ENCODE measurements at regions of chr2 and their contacts with region 1.

Region 1: DNA sequence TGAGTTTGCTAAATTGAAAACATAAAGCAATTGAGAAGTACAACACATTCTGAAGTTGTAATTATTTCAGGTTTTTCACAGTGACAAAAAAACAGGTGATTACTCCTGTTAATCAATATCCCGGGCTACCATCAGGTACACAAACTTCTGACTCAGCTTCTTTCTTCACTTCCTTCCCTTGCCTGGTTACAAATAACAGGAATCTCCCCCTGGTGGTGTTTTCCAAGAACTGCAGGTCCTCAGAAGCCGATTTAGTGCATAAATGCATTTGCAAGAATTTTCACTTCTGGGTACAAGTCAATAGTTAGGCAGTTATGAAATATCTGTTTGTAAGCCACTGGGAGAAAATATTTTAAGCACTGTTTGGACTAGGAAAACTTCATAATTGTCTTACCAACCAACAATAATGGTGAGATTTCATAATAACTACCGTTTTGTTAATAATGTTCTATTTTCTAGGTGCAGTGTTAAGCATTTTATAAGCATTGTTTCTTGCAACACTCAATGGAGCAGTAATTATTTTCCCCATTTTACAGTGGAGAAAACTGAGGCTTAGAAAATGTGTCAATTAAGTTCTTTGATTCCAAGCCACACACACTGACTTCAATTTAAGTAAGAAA is 12.4 kb upstream of the GMCL1 start:
- DNase-seq: peak; percentile 76
- H3K4me3 ChIP-seq: no peak overlapping the region
- H3K27ac ChIP-seq: no peak overlapping the region
- H3K27me3 ChIP-seq: no peaks in the 10 kb centered on the region
- CTCF ChIP-seq: peak; percentile 90

Region 2: DNA sequence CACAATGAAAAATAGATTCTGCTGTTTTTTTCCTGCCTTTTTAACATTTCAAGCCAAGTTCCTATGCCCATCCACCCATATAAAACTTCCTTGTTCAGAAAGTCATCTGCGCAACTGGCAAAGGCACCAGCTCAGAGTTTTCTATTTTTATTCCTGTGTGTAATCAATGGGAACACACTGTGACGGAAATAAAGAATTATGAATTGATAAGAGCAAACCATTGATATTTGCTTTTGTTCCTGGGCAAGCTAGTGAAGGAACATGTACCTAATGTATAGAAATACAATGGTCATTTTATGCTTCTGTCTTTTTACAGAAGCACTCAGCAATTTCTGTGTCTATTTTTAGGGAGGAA is 142.7 kb before region 1 on chr2:
- CTCF ChIA-PET with region 1: no interaction called
- POLR2A ChIA-PET with region 1: no interaction called
- DNase-seq: no peak
- H3K4me3 ChIP-seq: no peak overlapping the region
- H3K27ac ChIP-seq: no peak overlapping the region
- H3K27me3 ChIP-seq: no peaks in the 10 kb centered on the region
- CTCF ChIP-seq: no peak

Region 3: GRCh38 chr2:69704446-69704845 is 112.6 kb before region 1 on chr2:
- CTCF ChIA-PET with region 1: no interaction called
- POLR2A ChIA-PET with region 1: no interaction called
- DNase-seq: no peak
- H3K4me3 ChIP-seq: no peak overlapping the region
- H3K27ac ChIP-seq: no peak overlapping the region
- H3K27me3 ChIP-seq: no peaks in the 10 kb centered on the region
- CTCF ChIP-seq: no peak

Region 4: DNA sequence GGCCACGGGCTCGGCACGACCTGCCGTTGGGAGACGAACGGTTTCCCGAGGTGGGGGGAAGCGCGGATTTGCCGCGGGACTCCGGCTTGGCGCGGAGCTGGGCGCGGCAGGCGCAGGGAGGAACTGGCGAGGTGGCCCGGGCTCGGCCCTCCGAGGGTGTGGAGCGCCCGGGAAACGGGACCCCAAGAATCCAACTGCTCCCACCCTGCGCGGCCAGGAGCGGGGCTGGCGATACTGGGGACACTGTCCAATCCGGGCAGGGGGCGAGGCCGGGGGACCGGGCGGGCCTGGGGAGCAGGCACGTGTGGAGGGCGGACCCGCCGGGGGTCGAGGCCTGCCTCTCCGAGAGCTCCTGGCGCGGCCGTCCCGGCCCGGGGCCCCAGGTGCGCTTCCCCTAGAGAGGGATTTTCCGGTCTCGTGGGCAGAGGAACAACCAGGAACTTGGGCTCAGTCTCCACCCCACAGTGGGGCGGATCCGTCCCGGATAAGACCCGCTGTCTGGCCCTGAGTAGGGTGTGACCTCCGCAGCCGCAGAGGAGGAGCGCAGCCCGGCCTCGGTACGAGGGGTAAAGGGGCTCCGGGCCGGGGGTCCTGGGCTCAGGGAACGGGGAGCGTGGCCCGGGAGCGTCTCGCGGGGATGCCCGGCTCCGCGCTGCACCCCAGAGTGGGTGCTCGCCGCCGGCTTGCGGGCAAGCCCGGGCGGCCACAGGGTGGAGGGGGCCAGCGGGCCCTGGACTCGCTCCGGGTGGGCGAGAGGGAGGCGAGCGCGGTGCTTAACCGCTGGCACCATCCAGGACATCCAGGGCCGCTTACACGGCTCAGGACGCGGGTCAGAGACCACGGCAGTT is 75.2 kb before region 1 on chr2 and contains the start of gene ANXA4:
- CTCF ChIA-PET with region 1: interaction called, 36 read pairs
- POLR2A ChIA-PET with region 1: interaction called, 4 read pairs
- DNase-seq: peak; percentile 45
- H3K4me3 ChIP-seq: peak within 1 kb of the TSS; percentile 73
- H3K27ac ChIP-seq: peak within 1 kb of the TSS; percentile 95
- H3K27me3 ChIP-seq: no peaks in the 10 kb centered on the region
- CTCF ChIP-seq: no peak
- polyA plus RNA-seq, gene ANXA4: 105 and 125 TPM in 2 replicates

Region 5: GRCh38 chr2:69755862-69756467 is 61.1 kb before region 1 on chr2:
- CTCF ChIA-PET with region 1: interaction called, 11 read pairs
- POLR2A ChIA-PET with region 1: no interaction called
- DNase-seq: no peak
- H3K4me3 ChIP-seq: no peak overlapping the region
- H3K27ac ChIP-seq: no peak overlapping the region
- H3K27me3 ChIP-seq: no peaks in the 10 kb centered on the region
- CTCF ChIP-seq: no peak

Region 6: DNA sequence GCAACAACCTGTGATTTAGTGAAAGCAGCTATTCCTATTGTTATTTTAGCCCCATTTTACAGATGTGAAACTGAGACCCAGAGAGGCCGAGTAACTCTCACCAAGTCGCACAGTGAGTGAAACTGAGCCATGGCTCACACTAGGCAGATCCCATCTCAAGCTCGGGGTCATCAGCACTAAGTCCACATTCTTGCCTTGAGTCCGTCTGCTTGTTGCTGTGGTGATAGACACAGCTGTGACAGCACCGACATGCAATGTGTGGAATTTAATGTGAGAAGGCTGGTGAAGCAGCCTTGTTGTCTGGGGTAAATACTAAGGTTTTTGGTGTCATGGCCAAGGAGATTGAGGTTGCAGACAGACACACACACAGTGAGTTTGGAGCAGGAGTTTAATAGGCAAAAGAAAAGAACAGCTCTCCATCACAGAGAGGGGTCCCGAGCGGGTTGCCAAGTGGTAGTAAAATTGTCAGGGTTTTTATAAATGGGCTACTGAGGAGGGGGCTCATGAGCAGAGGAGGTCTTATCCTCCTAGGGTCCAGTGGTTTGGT is 27.8 kb before region 1 on chr2:
- CTCF ChIA-PET with region 1: interaction called, 13 read pairs
- POLR2A ChIA-PET with region 1: no interaction called
- DNase-seq: peak; percentile 62
- H3K4me3 ChIP-seq: no peak overlapping the region
- H3K27ac ChIP-seq: peak overlapping the region; percentile 47
- H3K27me3 ChIP-seq: no peaks in the 10 kb centered on the region
- CTCF ChIP-seq: no peak

Region 7: DNA sequence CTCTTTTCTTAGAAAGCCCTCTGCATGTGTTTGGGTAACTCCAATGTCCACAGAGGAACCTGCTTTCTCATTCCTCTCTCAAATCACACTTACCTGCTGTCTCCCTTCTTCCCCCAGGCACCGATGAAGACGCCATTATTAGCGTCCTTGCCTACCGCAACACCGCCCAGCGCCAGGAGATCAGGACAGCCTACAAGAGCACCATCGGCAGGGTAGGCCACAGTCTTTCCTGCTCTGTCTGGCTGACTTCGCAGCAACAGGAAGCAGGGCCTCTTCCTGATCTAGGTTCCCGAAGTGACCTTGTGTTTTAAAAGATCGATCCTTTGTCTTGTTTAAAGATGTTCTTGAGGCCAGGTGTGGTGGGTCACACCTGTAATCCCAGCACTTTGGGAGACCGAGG is 12.6 kb before region 1 on chr2:
- CTCF ChIA-PET with region 1: interaction called, 43 read pairs
- POLR2A ChIA-PET with region 1: interaction called, 9 read pairs
- DNase-seq: no peak
- H3K4me3 ChIP-seq: no peak overlapping the region
- H3K27ac ChIP-seq: no peak overlapping the region
- H3K27me3 ChIP-seq: no peaks in the 10 kb centered on the region
- CTCF ChIP-seq: no peak

Measured in AG04450 (cell line).